ENCODE measurements at regions of chr14 and their contacts with region 1.

Region 1: GRCh38 chr14:23528555-23528954 is 23.0 kb downstream of the ZFHX2 start:
- DNase-seq: peak; percentile 52
- ATAC-seq: peak; percentile 77
- H3K4me3 Mint-ChIP-seq: no peak overlapping the region
- H3K27ac Mint-ChIP-seq: peak overlapping the region; percentile 75
- H3K4me1 Mint-ChIP-seq: peaks cover 50% of the 10 kb centered on the region
- H3K27me3 Mint-ChIP-seq: no peaks in the 10 kb centered on the region; the same call in 1 of the 2 replicates
- CTCF ChIP-seq: no peak

Region 2: DNA sequence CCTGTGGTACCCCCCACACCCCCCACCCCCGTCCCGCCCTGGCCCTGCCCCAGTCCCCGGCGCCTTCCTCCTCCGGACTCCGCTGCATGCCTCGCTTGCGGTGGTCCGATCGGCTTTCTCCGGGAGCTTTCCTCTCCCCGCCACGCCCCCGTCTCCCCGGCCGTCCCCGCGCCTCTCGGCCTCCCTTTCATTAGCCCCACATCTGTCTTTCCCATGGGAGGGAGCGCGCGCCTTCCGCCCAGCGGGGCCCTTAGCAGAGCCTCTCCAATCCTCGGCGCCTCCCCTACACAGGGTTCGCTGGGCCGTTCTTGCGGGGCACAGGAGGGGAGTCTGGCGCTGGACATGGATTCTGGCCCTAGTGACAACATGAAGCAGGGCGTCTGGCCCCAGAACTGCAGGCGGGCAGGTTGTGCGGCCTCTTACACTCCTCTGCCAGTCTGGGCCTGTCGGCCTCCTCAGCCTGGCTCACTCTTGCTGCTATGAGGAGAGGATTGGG is 162.1 kb before region 1 on chr14:
- CTCF ChIA-PET with region 1: no interaction called
- POLR2A ChIA-PET with region 1: no interaction called
- DNase-seq: peak; percentile 93
- ATAC-seq: peak; percentile 63
- H3K4me3 Mint-ChIP-seq: peak overlapping the region; percentile 71
- H3K27ac Mint-ChIP-seq: peak overlapping the region; percentile 75
- H3K4me1 Mint-ChIP-seq: peaks cover 27% of the 10 kb centered on the region
- H3K27me3 Mint-ChIP-seq: peaks cover 51% of the 10 kb centered on the region
- CTCF ChIP-seq: no peak

Region 3: DNA sequence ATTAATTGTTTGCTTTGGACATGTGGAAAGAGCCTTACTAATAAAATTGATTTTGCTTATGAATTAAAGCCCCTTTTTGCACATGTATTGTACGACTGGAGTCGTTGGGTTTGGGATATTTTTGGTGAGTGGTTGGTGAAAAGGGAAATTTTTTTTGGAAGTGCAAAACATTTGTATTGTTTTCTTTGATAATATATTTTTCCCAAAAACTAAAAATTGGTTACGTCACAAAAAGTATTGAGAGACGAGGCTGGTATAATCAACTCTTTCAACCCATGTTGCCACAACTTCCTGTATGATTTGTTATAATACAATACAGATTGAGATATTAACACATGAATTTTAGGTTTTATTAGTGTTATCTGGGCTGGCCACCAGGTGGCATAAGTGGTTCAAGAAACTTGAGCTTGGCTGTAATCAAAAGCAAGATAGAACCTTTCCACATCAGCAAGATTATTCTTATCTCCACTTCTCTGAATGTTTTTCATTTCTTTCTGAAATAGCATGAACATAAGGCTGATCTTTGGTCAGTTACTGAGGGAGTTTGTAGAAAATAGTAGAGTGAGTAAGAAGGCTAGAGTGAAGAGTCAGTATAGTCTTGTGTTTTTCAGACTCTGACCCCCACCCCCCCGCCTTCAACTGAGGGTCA is 50.3 kb before region 1 on chr14:
- CTCF ChIA-PET with region 1: interaction called, 62 read pairs
- POLR2A ChIA-PET with region 1: interaction called, 7 read pairs
- DNase-seq: peak; percentile 49
- ATAC-seq: no peak
- H3K4me3 Mint-ChIP-seq: no peak overlapping the region
- H3K27ac Mint-ChIP-seq: no peak overlapping the region
- H3K4me1 Mint-ChIP-seq: peaks cover 24% of the 10 kb centered on the region
- H3K27me3 Mint-ChIP-seq: no peaks in the 10 kb centered on the region
- CTCF ChIP-seq: peak; percentile 59

Region 4: GRCh38 chr14:23483236-23483854 is 45.2 kb before region 1 on chr14:
- CTCF ChIA-PET with region 1: interaction called, 62 read pairs
- POLR2A ChIA-PET with region 1: interaction called, 7 read pairs
- DNase-seq: peak; percentile 87
- ATAC-seq: peak; percentile 87
- H3K4me3 Mint-ChIP-seq: peak overlapping the region; percentile 55
- H3K27ac Mint-ChIP-seq: peak overlapping the region; percentile 97
- H3K4me1 Mint-ChIP-seq: peaks cover 65% of the 10 kb centered on the region
- H3K27me3 Mint-ChIP-seq: no peaks in the 10 kb centered on the region; the same call in 1 of the 2 replicates
- CTCF ChIP-seq: peak; percentile 72

Region 5: DNA sequence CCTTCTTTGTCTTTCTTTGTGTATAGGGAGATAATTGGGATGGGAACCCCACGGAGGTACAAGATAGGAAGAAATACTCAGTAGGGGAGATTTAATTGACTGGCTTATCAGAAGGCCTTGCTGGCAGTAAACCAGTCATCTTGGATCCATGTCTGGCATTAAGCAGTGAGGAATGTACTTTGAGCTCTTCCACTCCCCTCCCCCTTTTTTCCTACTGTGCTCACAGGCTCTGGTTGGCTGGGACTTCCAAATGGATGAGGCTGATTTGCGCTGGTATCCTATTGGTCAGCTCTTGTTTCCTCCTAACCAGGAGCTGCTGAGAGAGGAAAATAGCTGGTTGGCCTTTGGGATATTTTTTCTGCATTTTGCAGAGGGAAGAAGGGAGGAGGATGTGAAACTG is 34.3 kb before region 1 on chr14:
- CTCF ChIA-PET with region 1: interaction called, 17 read pairs
- POLR2A ChIA-PET with region 1: interaction called, 4 read pairs
- DNase-seq: peak; percentile 44
- ATAC-seq: peak; percentile 99
- H3K4me3 Mint-ChIP-seq: peak overlapping the region; percentile 37; the same call in 1 of the 2 replicates
- H3K27ac Mint-ChIP-seq: peak overlapping the region; percentile 95
- H3K4me1 Mint-ChIP-seq: peaks cover 30% of the 10 kb centered on the region
- H3K27me3 Mint-ChIP-seq: no peaks in the 10 kb centered on the region
- CTCF ChIP-seq: no peak

Region 6: GRCh38 chr14:23512156-23512555 is 16.4 kb before region 1 on chr14:
- CTCF ChIA-PET with region 1: interaction called, 23 read pairs
- POLR2A ChIA-PET with region 1: no interaction called
- DNase-seq: no peak
- ATAC-seq: no peak
- H3K4me3 Mint-ChIP-seq: no peak overlapping the region
- H3K27ac Mint-ChIP-seq: no peak overlapping the region
- H3K4me1 Mint-ChIP-seq: peaks cover 8% of the 10 kb centered on the region
- H3K27me3 Mint-ChIP-seq: peaks cover 40% of the 10 kb centered on the region
- CTCF ChIP-seq: no peak

Region 7: GRCh38 chr14:23539248-23540140 is 10.9 kb after region 1 on chr14:
- CTCF ChIA-PET with region 1: interaction called, 117 read pairs
- POLR2A ChIA-PET with region 1: interaction called, 49 read pairs
- DNase-seq: peak; percentile 77
- ATAC-seq: peak; percentile 22
- H3K4me3 Mint-ChIP-seq: peak overlapping the region; percentile 83
- H3K27ac Mint-ChIP-seq: peak overlapping the region; percentile 100
- H3K4me1 Mint-ChIP-seq: peaks cover 57% of the 10 kb centered on the region
- H3K27me3 Mint-ChIP-seq: no peaks in the 10 kb centered on the region
- CTCF ChIP-seq: peak; percentile 83

Measured in WTC11 (cell line).